ENCODE measurements at regions of chr1 and their contacts with region 1.

Region 1: GRCh38 chr1:192477630-192478029 is 97.9 kb upstream of the RGS1 start:
- DNase-seq: peak in 6 of 9 donors; percentile 20 to 59 (median 38)
- ATAC-seq: peak; percentile 75
- H3K4me3 ChIP-seq: no peak overlapping the region
- H3K4me3 Mint-ChIP-seq: no peak overlapping the region
- H3K27ac ChIP-seq: no peak overlapping the region
- H3K27ac Mint-ChIP-seq: no peak overlapping the region
- H3K4me1 ChIP-seq: no peaks in the 10 kb centered on the region
- H3K4me1 Mint-ChIP-seq: no peaks in the 10 kb centered on the region
- H3K27me3 ChIP-seq: no peaks in the 10 kb centered on the region
- H3K27me3 Mint-ChIP-seq: peaks cover 0 to 16% (median 0%) of the 10 kb centered on the region in 5 donors

Region 2: GRCh38 chr1:192539297-192540092 is 61.9 kb after region 1 on chr1:
- CTCF ChIA-PET with region 1: interaction called, 4 read pairs
- POLR2A ChIA-PET with region 1: no interaction called
- intact Hi-C with region 1: loop called in 1 of 2 experiments (anchors 2 kb)
- DNase-seq: peak in 4 of 9 donors; percentile 4 to 22 (median 6)
- ATAC-seq: peak; percentile 37
- H3K4me3 ChIP-seq: peak overlapping the region; percentile 8
- H3K4me3 Mint-ChIP-seq: peak overlapping the region; percentile 12 to 88 (median 56)
- H3K27ac ChIP-seq: peak overlapping the region; percentile 47
- H3K27ac Mint-ChIP-seq: peak overlapping the region; percentile 80 to 97 (median 89)
- H3K4me1 ChIP-seq: peaks cover 10 to 29% of the 10 kb centered on the region in 2 donors
- H3K4me1 Mint-ChIP-seq: peaks cover 15 to 57% (median 29%) of the 10 kb centered on the region in 7 donors
- H3K27me3 ChIP-seq: no peaks in the 10 kb centered on the region
- H3K27me3 Mint-ChIP-seq: no peaks in the 10 kb centered on the region

Region 3: DNA sequence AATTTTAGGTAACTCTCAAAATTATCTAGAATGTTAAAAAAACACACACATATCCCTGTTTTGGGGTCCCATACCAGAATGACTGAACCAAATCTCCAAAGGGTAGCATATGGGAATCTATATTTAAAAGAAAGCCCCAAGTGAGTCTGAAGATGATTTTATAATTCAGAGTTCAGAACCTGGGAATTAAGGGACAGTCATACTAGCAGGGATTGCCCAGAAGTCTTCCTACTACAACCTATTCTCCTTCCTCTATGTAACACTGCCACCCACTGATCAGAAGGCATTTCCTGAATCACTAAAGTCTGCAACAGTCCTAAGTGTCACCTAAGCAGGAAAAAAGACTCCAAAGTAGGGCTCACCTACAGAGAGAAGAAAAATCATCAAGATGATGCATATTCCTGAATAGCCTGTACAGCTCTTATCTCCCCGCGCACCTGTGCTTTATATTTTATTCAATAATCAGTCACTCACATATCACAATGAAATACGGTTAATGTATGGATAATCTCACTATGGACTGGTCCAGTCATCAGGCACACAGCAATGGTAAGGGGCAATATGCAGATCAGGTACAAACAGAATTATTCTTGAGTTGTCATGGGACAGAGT is 102.8 kb after region 1 on chr1:
- CTCF ChIA-PET with region 1: interaction called, 59 read pairs
- POLR2A ChIA-PET with region 1: no interaction called
- intact Hi-C with region 1: loop called (anchors 1 kb)
- DNase-seq: peak in 3 of 9 donors; percentile 15 to 44 (median 38)
- ATAC-seq: peak; percentile 40
- H3K4me3 ChIP-seq: no peak overlapping the region
- H3K4me3 Mint-ChIP-seq: peak overlapping the region in 2 of 10 donors; percentile 31 to 40
- H3K27ac ChIP-seq: no peak overlapping the region
- H3K27ac Mint-ChIP-seq: peak overlapping the region in 2 of 9 donors; percentile 8 to 43
- H3K4me1 ChIP-seq: peaks cover 7 to 15% of the 10 kb centered on the region in 2 donors
- H3K4me1 Mint-ChIP-seq: peaks cover 8 to 44% (median 28%) of the 10 kb centered on the region in 7 donors
- H3K27me3 ChIP-seq: no peaks in the 10 kb centered on the region
- H3K27me3 Mint-ChIP-seq: peaks cover 0 to 2% (median 0%) of the 10 kb centered on the region in 5 donors

Region 4: DNA sequence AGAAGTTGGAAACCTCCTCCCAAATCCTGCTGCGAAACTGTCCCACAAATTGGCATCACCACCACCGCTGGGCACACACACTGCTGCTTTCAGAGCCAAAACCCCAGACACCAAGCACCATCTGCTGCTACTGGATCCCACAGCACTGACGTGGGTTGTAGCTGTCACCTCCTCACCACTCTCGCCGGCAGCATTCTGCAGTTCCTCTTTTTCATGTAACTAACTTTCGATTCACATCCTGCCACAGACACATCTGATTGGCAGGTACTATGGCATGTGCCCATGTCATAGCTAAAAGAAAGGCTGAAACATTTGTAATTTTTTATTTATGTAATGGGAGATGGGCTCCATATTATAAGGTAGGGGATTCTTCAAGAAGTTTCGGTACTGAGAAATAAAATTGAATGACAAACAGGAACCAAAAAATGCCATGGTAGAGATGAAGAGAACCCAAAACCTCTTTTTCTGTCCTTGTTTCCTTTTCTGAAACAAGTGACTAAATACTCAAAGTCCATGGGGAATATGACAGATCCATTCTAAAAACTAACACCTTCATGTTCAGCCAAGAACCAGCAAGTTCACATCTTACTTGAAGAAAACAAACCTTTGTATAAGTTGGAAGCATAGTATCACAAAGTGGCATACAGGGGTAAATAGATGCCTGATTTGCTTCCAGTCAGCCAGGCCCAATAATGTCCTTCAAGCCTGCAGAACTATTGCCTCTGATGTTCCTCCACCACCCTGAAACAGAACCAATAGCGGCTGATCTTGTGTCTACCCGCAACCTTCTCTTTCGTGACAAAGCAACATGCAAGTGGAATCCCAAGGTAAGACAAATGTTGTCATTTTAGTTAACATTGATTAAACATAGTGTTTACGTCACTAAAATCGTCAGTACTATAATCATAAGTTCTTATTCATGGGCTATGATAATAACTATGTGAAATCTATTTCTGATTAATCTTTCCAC is 131.8 kb after region 1 on chr1:
- CTCF ChIA-PET with region 1: interaction called, 68 read pairs
- POLR2A ChIA-PET with region 1: no interaction called
- intact Hi-C with region 1: loop called (anchors 1 kb)
- DNase-seq: peak; percentile 30 to 80 (median 69)
- ATAC-seq: peak; percentile 96
- H3K4me3 ChIP-seq: peak overlapping the region; percentile 3
- H3K4me3 Mint-ChIP-seq: peak overlapping the region; percentile 52 to 81 (median 65)
- H3K27ac ChIP-seq: peak overlapping the region; percentile 14
- H3K27ac Mint-ChIP-seq: peak overlapping the region; percentile 54 to 91 (median 86)
- H3K4me1 ChIP-seq: peaks cover 10 to 14% of the 10 kb centered on the region in 2 donors
- H3K4me1 Mint-ChIP-seq: peaks cover 12 to 16% (median 15%) of the 10 kb centered on the region in 7 donors
- H3K27me3 ChIP-seq: no peaks in the 10 kb centered on the region
- H3K27me3 Mint-ChIP-seq: peaks cover 0 to 2% (median 0%) of the 10 kb centered on the region in 5 donors

Region 5: DNA sequence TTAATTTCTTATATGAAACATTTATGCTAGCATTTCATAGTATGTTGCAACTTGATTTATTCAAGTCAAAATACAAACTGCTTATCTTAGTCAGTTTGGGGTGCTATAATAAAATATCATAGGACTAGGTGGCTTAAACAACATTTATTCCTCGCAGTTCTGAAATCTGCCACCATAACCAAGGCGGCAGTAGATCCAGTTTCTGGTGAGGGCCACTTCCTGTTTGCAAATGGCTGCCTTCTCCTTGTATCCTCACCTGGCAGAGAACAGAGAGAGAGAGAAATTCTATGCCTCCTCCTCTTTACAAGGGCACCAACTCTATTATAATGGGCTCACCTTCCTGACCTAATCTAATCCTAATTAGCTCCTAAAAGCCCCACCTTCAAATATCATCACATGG is 255.2 kb after region 1 on chr1:
- CTCF ChIA-PET with region 1: no interaction called
- POLR2A ChIA-PET with region 1: no interaction called
- intact Hi-C with region 1: loop called in 1 of 2 experiments (anchors 5 kb)
- DNase-seq: peak in 1 of 9 donors; percentile 9
- ATAC-seq: no peak
- H3K4me3 ChIP-seq: no peak overlapping the region
- H3K4me3 Mint-ChIP-seq: no peak overlapping the region
- H3K27ac ChIP-seq: no peak overlapping the region
- H3K27ac Mint-ChIP-seq: no peak overlapping the region
- H3K4me1 ChIP-seq: no peaks in the 10 kb centered on the region
- H3K4me1 Mint-ChIP-seq: no peaks in the 10 kb centered on the region
- H3K27me3 ChIP-seq: no peaks in the 10 kb centered on the region
- H3K27me3 Mint-ChIP-seq: peaks cover 0 to 4% (median 0%) of the 10 kb centered on the region in 5 donors

Region 6: DNA sequence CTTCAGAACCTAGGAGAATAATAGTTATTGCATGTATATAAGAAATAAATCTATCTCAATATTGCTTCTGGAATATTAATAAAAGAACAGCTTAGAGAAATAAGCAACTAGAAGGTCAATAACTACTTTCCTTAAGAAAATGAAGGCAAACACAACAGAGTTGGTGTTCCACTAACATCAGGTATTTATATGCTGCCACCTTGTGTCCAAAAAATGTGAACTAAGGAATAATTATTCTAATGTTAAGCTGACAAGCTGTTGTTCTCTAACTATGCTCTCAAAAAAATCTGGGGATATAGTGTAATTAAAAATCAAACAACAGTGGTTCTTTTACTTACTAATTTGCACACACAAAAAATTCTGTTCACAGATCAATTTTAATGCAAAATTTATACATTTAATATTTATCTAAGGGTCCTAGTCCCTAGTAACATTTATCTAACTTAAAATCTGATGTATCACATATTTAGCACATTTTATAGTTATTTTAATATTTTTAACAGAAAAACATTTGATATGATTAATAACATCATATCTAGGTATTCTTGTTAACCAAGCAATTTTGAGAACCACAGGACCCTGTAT is 541.9 kb after region 1 on chr1:
- CTCF ChIA-PET with region 1: interaction called, 4 read pairs
- POLR2A ChIA-PET with region 1: no interaction called
- intact Hi-C with region 1: loop called (anchors 1 kb)
- DNase-seq: peak in 6 of 9 donors; percentile 14 to 36 (median 22)
- ATAC-seq: peak; percentile 55
- H3K4me3 ChIP-seq: no peak overlapping the region
- H3K4me3 Mint-ChIP-seq: no peak overlapping the region
- H3K27ac ChIP-seq: no peak overlapping the region
- H3K27ac Mint-ChIP-seq: no peak overlapping the region
- H3K4me1 ChIP-seq: no peaks in the 10 kb centered on the region
- H3K4me1 Mint-ChIP-seq: no peaks in the 10 kb centered on the region
- H3K27me3 ChIP-seq: no peaks in the 10 kb centered on the region
- H3K27me3 Mint-ChIP-seq: no peaks in the 10 kb centered on the region

Region 7: DNA sequence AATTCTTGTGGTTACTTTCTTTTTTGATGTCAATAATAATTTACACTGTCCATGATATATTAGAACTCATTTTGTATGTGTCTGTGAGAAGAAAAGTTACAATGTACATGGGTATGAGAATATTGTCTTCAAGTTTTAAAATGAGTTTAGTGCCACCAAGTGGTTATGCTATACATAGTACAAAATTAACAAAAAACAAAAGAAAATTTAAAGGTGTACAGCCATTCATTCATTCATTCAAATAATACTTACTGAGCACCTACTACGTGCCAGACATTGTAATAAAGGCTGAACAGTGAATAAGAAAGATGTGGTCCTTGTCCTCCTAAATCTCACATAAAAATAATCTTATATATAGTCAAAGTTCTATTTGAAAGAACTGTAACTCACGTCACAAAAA is 553.8 kb after region 1 on chr1:
- CTCF ChIA-PET with region 1: interaction called, 4 read pairs
- POLR2A ChIA-PET with region 1: no interaction called
- intact Hi-C with region 1: loop called in 1 of 2 experiments (anchors 5 kb)
- DNase-seq: peak in 1 of 9 donors; percentile 2
- ATAC-seq: peak; percentile 54
- H3K4me3 ChIP-seq: no peak overlapping the region
- H3K4me3 Mint-ChIP-seq: no peak overlapping the region
- H3K27ac ChIP-seq: no peak overlapping the region
- H3K27ac Mint-ChIP-seq: no peak overlapping the region
- H3K4me1 ChIP-seq: no peaks in the 10 kb centered on the region
- H3K4me1 Mint-ChIP-seq: peaks cover 10 to 31% (median 29%) of the 10 kb centered on the region in 7 donors
- H3K27me3 ChIP-seq: no peaks in the 10 kb centered on the region
- H3K27me3 Mint-ChIP-seq: no peaks in the 10 kb centered on the region